Right lobe of liver (tissue), 6 donors: ENCODE measurements at regions of chr9 and their contacts with region 1.

Region 1: DNA sequence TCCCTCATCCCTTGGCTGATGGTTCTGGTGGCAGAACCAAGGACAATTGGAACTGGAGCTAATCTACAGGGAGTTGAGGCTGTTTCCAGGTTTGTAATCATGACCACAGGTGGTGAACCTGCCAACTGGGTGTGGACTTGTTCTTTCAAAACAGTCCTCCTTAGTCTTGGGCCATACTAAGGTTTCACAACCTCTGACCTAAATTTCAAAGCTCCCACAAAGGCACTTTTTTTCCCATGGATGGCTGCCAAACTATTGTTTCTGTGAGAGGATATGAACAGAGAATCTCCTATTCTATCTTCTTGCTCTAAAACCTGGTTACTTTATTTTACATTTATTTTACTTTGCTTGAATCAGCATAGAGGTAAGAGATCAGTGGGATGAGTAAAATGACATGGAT is 106.5 kb upstream of the IZUMO3 start:
- DNase-seq: no peak
- ATAC-seq: no peak
- H3K4me3 ChIP-seq: no peak overlapping the region
- H3K27ac ChIP-seq: no peak overlapping the region
- H3K4me1 ChIP-seq: no peaks in the 10 kb centered on the region
- H3K27me3 ChIP-seq: no peaks in the 10 kb centered on the region
- CTCF ChIP-seq: no peak
- POLR2A ChIP-seq: no peak

Region 2: DNA sequence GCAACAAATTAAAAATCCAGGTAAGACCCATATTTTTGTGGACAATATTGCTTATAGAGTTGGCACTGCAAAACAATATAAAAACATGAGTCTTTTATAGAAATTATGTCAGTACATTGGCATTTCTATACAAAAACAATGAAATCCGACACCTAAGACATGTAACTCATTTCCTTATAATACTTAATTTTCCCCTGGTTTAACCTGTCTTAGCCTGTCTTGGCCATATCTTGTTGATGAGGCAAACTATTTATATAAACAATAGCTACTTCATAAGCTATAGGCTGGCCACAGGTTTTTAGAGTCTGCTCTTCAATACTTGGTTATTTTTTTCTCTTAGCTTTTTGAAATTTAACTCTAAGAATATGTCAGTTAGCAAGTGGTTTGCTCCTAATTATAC is 61.7 kb before region 1 on chr9:
- intact Hi-C with region 1: loop called in 1 of 2 experiments (anchors 10 kb)
- DNase-seq: no peak
- ATAC-seq: no peak
- H3K4me3 ChIP-seq: no peak overlapping the region
- H3K27ac ChIP-seq: no peak overlapping the region
- H3K4me1 ChIP-seq: no peaks in the 10 kb centered on the region
- H3K27me3 ChIP-seq: no peaks in the 10 kb centered on the region
- CTCF ChIP-seq: no peak
- POLR2A ChIP-seq: no peak